MCF 10A (cell line): ENCODE measurements at regions of chrX and their contacts with region 1.

Region 1: DNA sequence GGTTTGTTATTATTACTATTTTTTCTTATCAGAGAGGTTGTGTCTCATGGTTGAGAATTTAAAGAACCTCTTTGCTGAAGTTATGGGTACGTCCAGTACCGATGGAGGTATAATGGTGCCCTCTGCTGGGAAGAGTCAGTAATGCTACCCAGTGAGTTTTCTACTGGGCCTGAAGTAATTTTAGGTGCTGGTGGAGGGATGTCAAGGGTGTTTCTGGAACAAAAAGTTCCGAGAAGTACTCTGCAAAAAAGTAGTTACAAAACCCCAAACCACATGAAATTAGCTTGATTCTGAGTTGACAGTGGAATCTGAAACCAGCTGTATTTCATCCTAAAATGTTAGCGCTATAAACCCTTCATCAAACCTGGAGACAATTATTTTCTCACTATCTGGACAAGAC is 102.5 kb upstream of the MID1 start:
- DNase-seq: peak; percentile 57
- H3K4me3 Mint-ChIP-seq: no peak overlapping the region
- H3K27ac Mint-ChIP-seq: no peak overlapping the region
- H3K4me1 Mint-ChIP-seq: no peaks in the 10 kb centered on the region
- H3K27me3 Mint-ChIP-seq: peaks cover 26% of the 10 kb centered on the region
- CTCF ChIP-seq: peak; percentile 73

Region 2: DNA sequence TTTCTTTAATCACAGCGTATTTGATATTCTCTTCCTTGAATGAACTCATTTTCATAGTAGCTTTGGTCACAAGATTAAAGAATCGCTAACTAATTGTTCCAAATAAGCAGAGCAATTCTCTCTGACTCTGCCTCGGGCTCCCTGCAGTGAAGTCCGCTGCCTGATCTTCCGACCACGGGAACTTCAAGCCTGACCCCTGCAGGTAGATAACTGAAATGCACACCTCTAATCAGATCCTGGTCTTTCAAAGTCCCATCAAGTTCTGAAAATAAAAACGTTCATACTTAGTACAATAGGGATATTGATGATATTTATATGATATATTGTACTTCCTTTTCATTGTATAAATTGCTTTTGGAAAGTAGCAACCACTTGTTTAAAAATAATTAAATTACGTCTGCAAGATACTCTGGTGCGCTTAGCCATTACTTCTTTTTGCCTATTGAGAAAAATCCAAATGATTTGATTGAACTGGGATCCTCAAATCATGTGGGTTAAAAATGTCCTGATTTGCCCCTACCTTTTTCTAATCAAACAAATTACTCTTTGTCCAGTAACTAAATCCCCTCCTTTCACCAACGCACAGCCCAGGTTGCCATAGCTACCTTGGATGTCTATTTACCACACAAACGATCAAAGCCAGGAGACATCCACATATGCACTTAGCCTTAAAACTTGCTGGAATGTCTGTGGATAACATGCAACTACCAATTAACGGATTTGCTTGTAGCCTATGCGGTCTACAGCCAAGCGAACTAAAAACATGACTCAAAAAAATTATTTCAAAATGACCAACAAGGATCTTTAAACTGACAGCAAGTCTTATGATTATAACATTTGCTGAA is 106.7 kb before region 1 on chrX:
- CTCF ChIA-PET with region 1: interaction called, 10 read pairs
- POLR2A ChIA-PET with region 1: interaction called, 6 read pairs
- intact Hi-C with region 1: no loop called
- DNase-seq: peak; percentile 71
- H3K4me3 Mint-ChIP-seq: peak overlapping the region; percentile 35
- H3K27ac Mint-ChIP-seq: no peak overlapping the region
- H3K4me1 Mint-ChIP-seq: peaks cover 48% of the 10 kb centered on the region
- H3K27me3 Mint-ChIP-seq: no peaks in the 10 kb centered on the region
- CTCF ChIP-seq: peak; percentile 60

Region 3: GRCh38 chrX:10702031-10702430 is 20.8 kb before region 1 on chrX:
- CTCF ChIA-PET with region 1: interaction called, 16 read pairs
- POLR2A ChIA-PET with region 1: no interaction called
- intact Hi-C with region 1: no loop called
- DNase-seq: no peak
- H3K4me3 Mint-ChIP-seq: no peak overlapping the region
- H3K27ac Mint-ChIP-seq: no peak overlapping the region
- H3K4me1 Mint-ChIP-seq: no peaks in the 10 kb centered on the region
- H3K27me3 Mint-ChIP-seq: peaks cover 39% of the 10 kb centered on the region
- CTCF ChIP-seq: no peak

Region 4: DNA sequence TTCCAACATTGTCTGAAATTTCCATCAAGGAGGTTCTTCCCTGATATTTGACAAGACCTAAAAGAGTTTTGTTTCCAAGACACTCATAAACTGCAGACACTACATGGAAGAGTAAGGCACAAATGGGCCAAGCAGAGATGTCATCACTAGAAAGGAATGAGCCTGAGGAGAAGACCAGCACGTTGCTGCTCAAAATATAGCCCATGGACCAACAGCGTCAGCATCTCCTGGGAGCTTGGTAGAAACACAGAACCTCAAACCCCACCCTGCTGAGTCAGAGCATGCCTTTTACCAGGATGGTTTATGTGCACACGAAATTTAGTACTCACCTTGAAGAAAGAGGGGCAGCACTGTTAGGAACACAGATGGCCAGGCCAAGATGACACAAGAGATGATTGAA is 26.3 kb after region 1 on chrX:
- CTCF ChIA-PET with region 1: interaction called, 43 read pairs
- POLR2A ChIA-PET with region 1: no interaction called
- intact Hi-C with region 1: no loop called
- DNase-seq: no peak
- H3K4me3 Mint-ChIP-seq: no peak overlapping the region
- H3K27ac Mint-ChIP-seq: no peak overlapping the region
- H3K4me1 Mint-ChIP-seq: peaks cover 7% of the 10 kb centered on the region
- H3K27me3 Mint-ChIP-seq: peaks cover 98% of the 10 kb centered on the region
- CTCF ChIP-seq: no peak

Region 5: GRCh38 chrX:10781847-10782530 is 59.1 kb after region 1 on chrX:
- CTCF ChIA-PET with region 1: interaction called, 10 read pairs
- POLR2A ChIA-PET with region 1: no interaction called
- intact Hi-C with region 1: no loop called
- DNase-seq: no peak
- H3K4me3 Mint-ChIP-seq: no peak overlapping the region
- H3K27ac Mint-ChIP-seq: no peak overlapping the region
- H3K4me1 Mint-ChIP-seq: no peaks in the 10 kb centered on the region
- H3K27me3 Mint-ChIP-seq: peaks cover 43% of the 10 kb centered on the region
- CTCF ChIP-seq: no peak

Region 6: GRCh38 chrX:11137543-11138139 is 414.8 kb after region 1 on chrX:
- CTCF ChIA-PET with region 1: interaction called, 11 read pairs
- POLR2A ChIA-PET with region 1: no interaction called
- intact Hi-C with region 1: loop called (anchors 1 kb)
- DNase-seq: peak; percentile 49
- H3K4me3 Mint-ChIP-seq: no peak overlapping the region
- H3K27ac Mint-ChIP-seq: no peak overlapping the region
- H3K4me1 Mint-ChIP-seq: no peaks in the 10 kb centered on the region
- H3K27me3 Mint-ChIP-seq: peaks cover 32% of the 10 kb centered on the region
- CTCF ChIP-seq: peak; percentile 49

Region 7: DNA sequence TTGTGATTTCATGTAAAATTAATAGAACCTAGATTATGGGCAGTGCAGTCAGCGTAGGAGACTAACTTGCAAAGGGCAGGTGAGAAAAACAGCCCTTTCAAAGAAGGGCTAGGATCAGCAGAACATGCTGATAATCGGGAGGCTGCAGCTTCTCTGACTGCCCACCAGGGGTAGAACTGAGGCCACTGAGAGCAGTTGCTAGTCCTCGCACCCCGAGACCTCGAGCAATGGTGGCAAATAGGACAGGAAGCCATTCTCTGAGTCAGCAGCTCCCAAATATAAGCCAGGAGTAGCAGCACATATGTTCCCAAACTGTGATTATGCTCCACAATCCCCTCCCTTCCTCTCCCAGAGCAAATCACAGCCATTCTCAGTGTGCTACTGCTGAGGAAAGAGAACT is 1221.7 kb after region 1 on chrX:
- CTCF ChIA-PET with region 1: no interaction called
- POLR2A ChIA-PET with region 1: no interaction called
- intact Hi-C with region 1: no loop called
- DNase-seq: peak; percentile 60
- H3K4me3 Mint-ChIP-seq: no peak overlapping the region
- H3K27ac Mint-ChIP-seq: no peak overlapping the region
- H3K4me1 Mint-ChIP-seq: no peaks in the 10 kb centered on the region
- H3K27me3 Mint-ChIP-seq: no peaks in the 10 kb centered on the region
- CTCF ChIP-seq: peak; percentile 38